ENCODE measurements at regions of chr10 and their contacts with region 1.

Region 1: DNA sequence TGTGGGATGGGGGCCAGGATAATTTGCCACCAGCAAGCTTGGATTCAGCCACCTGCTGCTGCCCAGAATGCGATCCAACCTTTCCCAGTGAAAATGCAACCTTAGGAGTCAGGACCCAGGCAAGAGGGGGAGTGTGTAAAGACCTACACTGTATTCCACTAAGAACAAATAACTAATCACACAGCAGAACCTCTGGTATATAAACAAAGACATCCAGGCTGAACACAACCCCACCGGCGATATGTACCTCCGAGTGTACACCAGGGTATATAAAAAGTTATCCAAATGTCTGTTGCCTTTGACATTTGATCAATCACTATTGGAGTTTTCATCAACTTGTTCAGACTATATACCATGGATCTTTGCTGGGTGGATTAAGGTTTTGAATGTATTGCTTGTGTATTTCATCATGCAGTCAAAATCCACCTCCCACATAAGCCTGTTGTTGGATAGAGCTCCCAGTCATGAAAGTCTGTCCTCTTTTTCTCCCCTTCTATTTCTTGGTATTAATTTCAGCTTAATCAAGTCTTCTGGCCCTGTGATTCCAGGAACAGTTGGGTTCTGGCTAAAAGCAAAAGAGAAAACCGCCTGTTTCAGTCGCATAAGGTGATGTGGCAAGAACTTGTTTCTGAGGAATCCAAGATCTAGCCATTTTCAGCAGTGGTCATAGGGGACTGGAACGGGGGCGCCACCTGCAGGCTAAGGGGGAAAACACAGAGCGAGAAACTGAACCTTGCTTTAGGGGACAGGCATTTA is 290.7 kb downstream of the CCDC3 start:
- DNase-seq: peak; percentile 83
- H3K4me3 ChIP-seq: no peak overlapping the region
- H3K27ac ChIP-seq: no peak overlapping the region
- H3K4me1 ChIP-seq: peaks cover 53% of the 10 kb centered on the region
- H3K27me3 ChIP-seq: no peaks in the 10 kb centered on the region
- CTCF ChIP-seq: peak; percentile 91 to 95
- POLR2A ChIP-seq: no peak

Region 2: GRCh38 chr10:12214763-12215218 is 496.0 kb before region 1 on chr10:
- CTCF ChIA-PET with region 1: interaction called, 4 read pairs
- POLR2A ChIA-PET with region 1: no interaction called
- dilution Hi-C with region 1: no loop called
- intact Hi-C with region 1: loop called (anchors 1 kb)
- DNase-seq: peak; percentile 65
- H3K4me3 ChIP-seq: no peak overlapping the region
- H3K27ac ChIP-seq: peak overlapping the region; percentile 23
- H3K4me1 ChIP-seq: peaks cover 6% of the 10 kb centered on the region
- H3K27me3 ChIP-seq: no peaks in the 10 kb centered on the region
- CTCF ChIP-seq: peak; percentile 42 to 51
- POLR2A ChIP-seq: no peak

Region 3: GRCh38 chr10:12735843-12736462 is 25.2 kb after region 1 on chr10:
- CTCF ChIA-PET with region 1: no interaction called
- POLR2A ChIA-PET with region 1: no interaction called
- dilution Hi-C with region 1: no loop called
- intact Hi-C with region 1: no loop called
- DNase-seq: no peak
- H3K4me3 ChIP-seq: no peak overlapping the region
- H3K27ac ChIP-seq: no peak overlapping the region
- H3K4me1 ChIP-seq: no peaks in the 10 kb centered on the region
- H3K27me3 ChIP-seq: peaks cover 0 to 3% of the 10 kb centered on the region in 2 experiments
- CTCF ChIP-seq: no peak
- POLR2A ChIP-seq: no peak

Region 4: DNA sequence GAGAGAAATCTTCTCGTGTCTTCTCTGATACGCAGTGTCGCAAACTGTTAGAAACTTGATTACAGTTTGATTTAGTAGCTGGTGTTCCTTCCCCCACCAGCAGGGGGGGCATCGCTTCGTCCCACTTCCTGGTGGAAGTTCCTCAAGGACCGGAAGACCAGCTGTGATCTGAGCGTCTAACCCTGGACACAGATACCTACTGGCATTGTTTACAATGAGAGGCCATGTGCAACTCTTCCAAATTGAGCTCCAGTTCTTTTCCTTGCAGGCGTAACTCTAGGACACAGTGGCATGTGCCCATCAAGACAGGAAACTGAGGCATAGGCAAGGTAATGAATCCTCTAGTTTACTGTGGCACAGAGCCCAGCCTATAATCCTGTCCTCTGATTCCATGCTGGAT is 71.8 kb after region 1 on chr10:
- CTCF ChIA-PET with region 1: interaction called, 15 read pairs
- POLR2A ChIA-PET with region 1: no interaction called
- dilution Hi-C with region 1: no loop called
- intact Hi-C with region 1: loop called (anchors 5 kb)
- DNase-seq: peak; percentile 58
- H3K4me3 ChIP-seq: no peak overlapping the region
- H3K27ac ChIP-seq: no peak overlapping the region
- H3K4me1 ChIP-seq: peaks cover 3% of the 10 kb centered on the region
- H3K27me3 ChIP-seq: peaks cover 0 to 2% of the 10 kb centered on the region in 2 experiments
- CTCF ChIP-seq: peak; percentile 82 to 88
- POLR2A ChIP-seq: no peak

Region 5: GRCh38 chr10:12884380-12884779 is 173.6 kb after region 1 on chr10:
- CTCF ChIA-PET with region 1: interaction called, 10 read pairs
- POLR2A ChIA-PET with region 1: no interaction called
- dilution Hi-C with region 1: no loop called
- intact Hi-C with region 1: no loop called
- DNase-seq: no peak
- H3K4me3 ChIP-seq: no peak overlapping the region
- H3K27ac ChIP-seq: no peak overlapping the region
- H3K4me1 ChIP-seq: no peaks in the 10 kb centered on the region
- H3K27me3 ChIP-seq: no peaks in the 10 kb centered on the region
- CTCF ChIP-seq: no peak
- POLR2A ChIP-seq: no peak

Region 6: GRCh38 chr10:13074561-13075451 is 364.0 kb after region 1 on chr10:
- CTCF ChIA-PET with region 1: interaction called, 36 read pairs
- POLR2A ChIA-PET with region 1: no interaction called
- dilution Hi-C with region 1: no loop called
- intact Hi-C with region 1: loop called (anchors 1 kb)
- DNase-seq: peak; percentile 61
- H3K4me3 ChIP-seq: no peak overlapping the region
- H3K27ac ChIP-seq: no peak overlapping the region
- H3K4me1 ChIP-seq: no peaks in the 10 kb centered on the region
- H3K27me3 ChIP-seq: peaks cover 5 to 7% of the 10 kb centered on the region in 2 experiments
- CTCF ChIP-seq: peak; percentile 83
- POLR2A ChIP-seq: no peak

Measured in endothelial cell of umbilical vein (primary cell).